A673 (cell line): ENCODE measurements at regions of chr18 and their contacts with region 1.

Region 1: DNA sequence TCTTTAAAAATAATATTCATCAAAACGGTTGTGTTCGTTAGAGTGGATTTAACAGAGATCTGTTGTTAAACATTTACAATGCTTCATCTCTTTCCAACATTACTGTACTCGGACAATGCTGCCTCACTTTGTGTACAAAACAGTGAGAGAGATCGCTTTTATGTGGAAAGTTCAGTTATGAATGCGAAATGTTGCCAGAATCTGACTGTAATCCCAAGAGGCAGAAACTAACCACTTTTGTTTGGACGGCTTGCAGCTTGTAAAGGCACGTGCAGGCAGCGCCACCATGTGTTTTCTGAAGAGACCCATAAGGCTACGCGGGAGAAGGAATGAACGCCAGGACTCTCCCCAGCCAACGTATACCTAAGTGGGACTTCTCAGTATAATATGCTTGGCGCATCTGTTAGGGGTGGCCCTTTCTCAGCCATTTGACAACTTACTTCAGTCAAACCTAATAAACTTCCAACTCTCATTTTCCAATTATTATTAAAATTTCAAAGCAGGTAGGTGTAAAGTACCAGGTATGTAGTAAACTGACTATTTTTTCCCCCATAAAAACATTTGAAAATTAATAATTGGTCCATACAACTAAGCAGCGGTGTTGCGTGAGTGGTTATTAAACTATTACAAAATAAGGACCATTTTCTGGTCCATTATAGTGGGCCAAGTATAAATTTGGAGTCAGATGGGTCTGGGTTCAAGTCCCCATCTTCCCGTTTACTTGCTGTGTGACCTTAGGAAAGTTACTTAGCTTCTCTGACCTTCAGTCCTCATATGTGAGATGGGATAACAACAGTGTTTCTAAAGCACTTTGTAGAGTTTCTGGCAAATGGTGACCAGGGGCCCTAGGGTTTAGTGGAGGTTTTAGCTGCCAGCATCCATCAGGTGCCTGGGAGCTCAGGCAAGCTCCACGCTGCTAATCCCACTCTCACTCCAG is 5.6 kb upstream of the NAPG start:
- DNase-seq: peak; percentile 97
- H3K4me3 ChIP-seq: no peak overlapping the region
- H3K27ac ChIP-seq: peak overlapping the region; percentile 87
- H3K4me1 ChIP-seq: peaks cover 29% of the 10 kb centered on the region
- H3K27me3 ChIP-seq: no peaks in the 10 kb centered on the region
- CTCF ChIP-seq: peak; percentile 94

Region 2: GRCh38 chr18:10059610-10060468 is 460.4 kb before region 1 on chr18:
- CTCF ChIA-PET with region 1: no interaction called
- POLR2A ChIA-PET with region 1: no interaction called
- intact Hi-C with region 1: loop called (anchors 2 kb)
- DNase-seq: peak; percentile 65
- H3K4me3 ChIP-seq: no peak overlapping the region
- H3K27ac ChIP-seq: peak overlapping the region; percentile 88
- H3K4me1 ChIP-seq: peaks cover 58% of the 10 kb centered on the region
- H3K27me3 ChIP-seq: no peaks in the 10 kb centered on the region
- CTCF ChIP-seq: no peak

Region 3: DNA sequence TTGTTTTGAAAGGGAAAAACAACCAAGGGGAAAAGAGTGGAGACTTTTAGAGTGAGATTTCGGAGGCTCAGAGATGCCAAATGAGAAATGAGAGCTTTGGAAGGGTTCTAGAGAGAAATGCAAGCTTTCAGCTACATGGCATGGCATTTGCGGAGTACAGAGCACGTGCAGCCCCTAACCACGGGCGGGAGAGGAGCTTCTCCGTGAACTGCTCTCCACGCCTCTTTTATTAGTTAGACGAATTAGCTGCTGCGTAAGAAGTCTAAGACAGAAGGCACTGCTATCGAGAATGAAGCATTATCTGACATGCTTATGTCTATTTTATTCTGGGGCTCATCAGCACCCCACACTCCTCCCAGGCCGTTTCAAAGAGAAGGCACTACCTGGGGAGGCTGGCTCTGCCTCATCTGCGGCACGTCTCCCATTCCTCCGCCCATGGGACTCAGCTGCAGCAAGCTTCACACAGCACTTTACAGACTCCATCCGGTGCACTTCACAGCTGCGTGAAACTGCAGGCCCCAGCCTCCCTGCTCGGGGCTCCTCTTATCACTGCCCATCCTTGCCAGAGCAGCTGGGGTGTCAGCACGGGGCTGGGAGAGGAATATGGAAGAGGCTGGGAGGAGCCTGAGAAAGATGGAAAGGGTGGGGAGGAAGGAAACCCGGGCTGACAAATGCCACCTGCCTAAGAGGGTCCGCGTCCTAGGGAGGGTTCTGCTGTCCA is 273.1 kb before region 1 on chr18:
- CTCF ChIA-PET with region 1: no interaction called
- POLR2A ChIA-PET with region 1: no interaction called
- intact Hi-C with region 1: loop called (anchors 5 kb)
- DNase-seq: no peak
- H3K4me3 ChIP-seq: no peak overlapping the region
- H3K27ac ChIP-seq: no peak overlapping the region
- H3K4me1 ChIP-seq: peaks cover 23% of the 10 kb centered on the region
- H3K27me3 ChIP-seq: no peaks in the 10 kb centered on the region
- CTCF ChIP-seq: no peak

Region 4: GRCh38 chr18:10259929-10260328 is 260.3 kb before region 1 on chr18:
- CTCF ChIA-PET with region 1: no interaction called
- POLR2A ChIA-PET with region 1: no interaction called
- intact Hi-C with region 1: no loop called
- DNase-seq: no peak
- H3K4me3 ChIP-seq: no peak overlapping the region
- H3K27ac ChIP-seq: no peak overlapping the region
- H3K4me1 ChIP-seq: no peaks in the 10 kb centered on the region
- H3K27me3 ChIP-seq: no peaks in the 10 kb centered on the region
- CTCF ChIP-seq: no peak

Region 5: DNA sequence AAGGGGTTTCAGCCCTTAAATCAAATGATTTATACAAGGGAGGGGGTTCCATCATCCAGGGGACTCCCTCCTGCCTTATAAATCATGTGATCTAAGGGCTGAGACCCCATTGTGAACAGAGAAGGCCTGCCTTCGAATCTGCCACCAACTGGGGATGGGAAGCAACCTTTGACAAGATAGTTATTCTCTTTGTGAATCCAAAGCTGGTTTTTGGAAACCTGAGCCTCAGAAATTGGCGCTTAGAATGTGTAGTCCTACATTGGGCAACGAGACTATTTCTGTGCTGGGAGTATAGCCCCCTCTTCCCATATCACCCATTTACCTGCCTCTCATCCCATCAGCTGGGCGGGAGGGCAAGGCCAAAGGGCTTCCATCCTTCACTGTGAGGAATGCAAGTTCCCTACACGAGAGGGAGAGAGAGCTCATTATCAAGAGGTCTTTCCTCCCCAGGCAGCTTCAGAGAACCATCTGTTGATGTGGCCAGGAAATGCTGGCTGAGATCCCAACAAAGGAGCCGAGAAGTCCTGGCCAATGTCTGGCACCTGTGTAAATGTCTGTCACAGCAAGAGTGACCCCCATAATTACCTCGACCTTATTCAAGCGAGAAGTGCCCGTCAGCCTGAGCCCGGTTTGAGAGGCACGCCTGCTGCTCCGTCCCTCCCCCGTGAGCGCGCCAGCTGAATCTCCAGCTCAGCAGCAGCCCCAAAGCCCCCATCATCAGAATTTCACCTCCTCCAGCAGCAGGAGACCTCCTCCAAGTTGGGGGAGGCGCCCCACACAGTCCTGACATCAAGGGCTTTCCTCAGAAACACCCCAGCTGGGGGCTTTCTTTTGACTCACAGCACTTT is 114.2 kb before region 1 on chr18:
- CTCF ChIA-PET with region 1: no interaction called
- POLR2A ChIA-PET with region 1: no interaction called
- intact Hi-C with region 1: loop called (anchors 5 kb)
- DNase-seq: peak; percentile 52
- H3K4me3 ChIP-seq: no peak overlapping the region
- H3K27ac ChIP-seq: peak overlapping the region; percentile 9
- H3K4me1 ChIP-seq: peaks cover 54% of the 10 kb centered on the region
- H3K27me3 ChIP-seq: peaks cover 4% of the 10 kb centered on the region
- CTCF ChIP-seq: no peak

Region 6: GRCh38 chr18:10463741-10464140 is 56.5 kb before region 1 on chr18:
- CTCF ChIA-PET with region 1: interaction called, 3 read pairs
- POLR2A ChIA-PET with region 1: interaction called, 12 read pairs
- intact Hi-C with region 1: loop called (anchors 1 kb)
- DNase-seq: no peak
- H3K4me3 ChIP-seq: no peak overlapping the region
- H3K27ac ChIP-seq: peak overlapping the region; percentile 100
- H3K4me1 ChIP-seq: peaks cover 90% of the 10 kb centered on the region
- H3K27me3 ChIP-seq: no peaks in the 10 kb centered on the region
- CTCF ChIP-seq: no peak

Region 7: GRCh38 chr18:10476338-10476791 is 43.9 kb before region 1 on chr18:
- CTCF ChIA-PET with region 1: no interaction called
- POLR2A ChIA-PET with region 1: no interaction called
- intact Hi-C with region 1: loop called (anchors 2 kb)
- DNase-seq: peak; percentile 96
- H3K4me3 ChIP-seq: peak overlapping the region; percentile 14
- H3K27ac ChIP-seq: peak overlapping the region; percentile 100
- H3K4me1 ChIP-seq: peaks cover 89% of the 10 kb centered on the region
- H3K27me3 ChIP-seq: no peaks in the 10 kb centered on the region
- CTCF ChIP-seq: no peak

Region 8: DNA sequence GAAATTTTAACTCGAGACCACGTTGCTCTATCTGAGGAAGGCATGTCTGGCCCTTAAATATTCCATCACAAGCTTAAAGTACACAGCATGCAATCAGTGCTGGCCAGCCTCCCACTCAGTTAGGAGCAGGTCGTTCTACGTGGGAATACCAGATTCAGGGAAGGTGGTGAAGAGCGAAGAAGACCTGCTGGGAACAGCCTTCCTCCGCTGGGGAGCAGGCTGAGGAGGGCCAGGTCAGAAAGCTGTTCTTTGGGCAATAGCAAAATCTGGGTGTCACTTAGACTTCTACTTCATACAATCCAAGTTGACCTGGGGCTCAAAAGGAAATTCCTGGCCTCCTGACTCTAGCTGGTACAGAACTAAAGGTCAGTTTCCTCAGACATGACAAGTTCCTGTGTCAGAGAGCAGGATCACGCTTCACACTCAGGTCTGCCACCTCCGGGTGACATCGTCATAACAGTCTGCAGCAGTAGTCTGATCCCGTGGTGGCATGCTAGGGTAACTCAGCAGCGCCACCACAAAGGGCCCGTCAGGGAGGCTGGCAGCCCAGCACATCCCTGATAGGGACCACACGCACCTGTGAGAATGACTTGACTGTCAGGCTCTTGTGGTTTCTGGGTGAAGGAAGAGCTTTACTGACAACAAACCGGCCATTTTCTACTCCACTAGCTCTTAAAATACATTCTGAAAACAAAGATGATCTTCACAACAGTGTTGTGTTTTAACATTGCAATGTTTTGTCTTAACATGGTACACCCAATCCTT is 29.7 kb before region 1 on chr18:
- CTCF ChIA-PET with region 1: no interaction called
- POLR2A ChIA-PET with region 1: no interaction called
- intact Hi-C with region 1: no loop called
- DNase-seq: no peak
- H3K4me3 ChIP-seq: no peak overlapping the region
- H3K27ac ChIP-seq: peak overlapping the region; percentile 52
- H3K4me1 ChIP-seq: peaks cover 27% of the 10 kb centered on the region
- H3K27me3 ChIP-seq: no peaks in the 10 kb centered on the region
- CTCF ChIP-seq: 0 out of 2 replicates have a peak, but pooled peaks have one; percentile 20

Region 9: DNA sequence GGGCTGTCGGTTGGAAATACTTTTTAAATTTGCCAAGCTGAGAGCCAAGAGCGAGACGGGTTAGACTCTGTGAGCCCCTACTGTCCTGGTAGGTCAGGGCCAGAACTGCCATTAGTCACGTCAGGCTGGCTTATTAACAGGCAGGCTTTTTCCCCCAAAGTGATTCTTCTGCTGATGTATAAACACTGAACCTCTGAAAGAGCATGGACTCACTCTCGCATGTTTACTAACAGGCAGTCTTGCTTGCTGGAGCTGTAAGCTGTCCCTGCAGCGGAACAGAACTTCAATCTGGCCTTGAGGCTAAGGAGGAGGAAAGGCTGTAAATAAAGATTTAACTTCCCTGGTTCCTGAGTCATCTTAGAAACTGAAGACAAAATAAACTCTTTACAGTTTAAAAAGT is 340.7 kb after region 1 on chr18:
- CTCF ChIA-PET with region 1: no interaction called
- POLR2A ChIA-PET with region 1: no interaction called
- intact Hi-C with region 1: no loop called
- DNase-seq: no peak
- H3K4me3 ChIP-seq: no peak overlapping the region
- H3K27ac ChIP-seq: no peak overlapping the region
- H3K4me1 ChIP-seq: no peaks in the 10 kb centered on the region
- H3K27me3 ChIP-seq: peaks cover 41% of the 10 kb centered on the region
- CTCF ChIP-seq: no peak